Activated T-helper 1 cell treated with anti-CD3 and anti-CD28 coated beads, Interleukin-12 subunit alpha, Interleukin-12 subunit beta, Interleukin-2, Interleukin-4 antibody, amounts not matched to agents 30 ng/mL and 10 ng/mL and 1 ng/mL, durations not matched to agents 14 hours and 24 hours and 36 hours (primary cell): ENCODE measurements at regions of chr7 and their contacts with region 1.

Region 1: GRCh38 chr7:23216021-23216420 is 30.6 kb upstream of the GPNMB start:
- DNase-seq: no peak
- H3K4me3 Mint-ChIP-seq: no peak overlapping the region
- H3K27ac Mint-ChIP-seq: no peak overlapping the region
- H3K4me1 Mint-ChIP-seq: no peaks in the 10 kb centered on the region
- H3K27me3 Mint-ChIP-seq: peaks cover 13% of the 10 kb centered on the region

Region 2: DNA sequence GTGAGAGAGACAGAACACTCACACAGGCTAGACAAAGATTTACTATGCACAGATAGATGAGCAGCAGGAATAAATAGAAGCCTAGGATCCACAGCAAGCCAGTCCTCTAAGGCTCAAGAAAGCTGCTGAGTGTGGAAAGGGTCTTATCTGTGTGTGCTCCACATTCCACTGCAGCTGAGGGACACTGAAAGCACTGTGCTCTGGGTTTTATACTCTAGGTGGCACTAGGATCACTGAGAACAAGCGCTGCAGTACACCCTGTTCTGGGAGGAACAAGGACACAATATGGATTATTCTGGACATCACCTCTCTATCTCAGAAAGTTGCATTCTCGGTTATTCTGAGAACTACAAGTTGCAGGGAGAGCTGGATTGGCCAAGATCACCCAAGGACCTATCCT is 115.3 kb before region 1 on chr7:
- intact Hi-C with region 1: no loop called
- DNase-seq: no peak
- H3K4me3 Mint-ChIP-seq: no peak overlapping the region
- H3K27ac Mint-ChIP-seq: no peak overlapping the region
- H3K4me1 Mint-ChIP-seq: peaks cover 5% of the 10 kb centered on the region
- H3K27me3 Mint-ChIP-seq: peaks cover 3% of the 10 kb centered on the region

Region 3: DNA sequence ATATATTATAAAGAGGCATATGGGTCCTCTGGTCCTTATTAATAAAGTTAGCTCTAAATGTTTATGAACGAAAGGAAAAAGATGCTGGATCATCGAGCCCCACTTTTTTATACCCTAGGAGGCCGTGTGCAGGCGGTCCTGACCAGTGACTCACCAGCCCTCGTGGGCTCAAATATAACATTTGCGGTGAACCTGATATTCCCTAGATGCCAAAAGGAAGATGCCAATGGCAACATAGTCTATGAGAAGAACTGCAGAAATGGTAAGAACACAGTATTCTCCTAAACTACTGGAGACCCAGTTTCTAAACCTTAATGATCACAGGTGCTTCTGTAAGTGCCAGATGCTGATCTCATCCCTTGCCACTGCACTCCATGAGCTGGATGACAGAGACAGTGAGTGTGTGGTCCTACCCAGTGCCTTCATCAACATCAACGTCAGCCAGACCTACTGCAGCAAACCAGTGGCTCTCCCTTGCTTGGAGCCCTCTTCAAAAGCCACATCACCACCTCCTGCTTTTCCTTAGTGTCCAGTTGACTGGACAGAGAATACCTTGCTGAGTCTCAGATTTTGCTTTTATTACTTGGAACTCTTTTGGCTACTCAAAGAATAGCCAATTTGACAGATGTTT is 38.1 kb after region 1 on chr7:
- intact Hi-C with region 1: loop called (anchors 1 kb)
- DNase-seq: no peak
- H3K4me3 Mint-ChIP-seq: no peak overlapping the region
- H3K27ac Mint-ChIP-seq: no peak overlapping the region
- H3K4me1 Mint-ChIP-seq: no peaks in the 10 kb centered on the region
- H3K27me3 Mint-ChIP-seq: peaks cover 63% of the 10 kb centered on the region